ENCODE measurements at regions of chr17 and their contacts with region 1.

Region 1: DNA sequence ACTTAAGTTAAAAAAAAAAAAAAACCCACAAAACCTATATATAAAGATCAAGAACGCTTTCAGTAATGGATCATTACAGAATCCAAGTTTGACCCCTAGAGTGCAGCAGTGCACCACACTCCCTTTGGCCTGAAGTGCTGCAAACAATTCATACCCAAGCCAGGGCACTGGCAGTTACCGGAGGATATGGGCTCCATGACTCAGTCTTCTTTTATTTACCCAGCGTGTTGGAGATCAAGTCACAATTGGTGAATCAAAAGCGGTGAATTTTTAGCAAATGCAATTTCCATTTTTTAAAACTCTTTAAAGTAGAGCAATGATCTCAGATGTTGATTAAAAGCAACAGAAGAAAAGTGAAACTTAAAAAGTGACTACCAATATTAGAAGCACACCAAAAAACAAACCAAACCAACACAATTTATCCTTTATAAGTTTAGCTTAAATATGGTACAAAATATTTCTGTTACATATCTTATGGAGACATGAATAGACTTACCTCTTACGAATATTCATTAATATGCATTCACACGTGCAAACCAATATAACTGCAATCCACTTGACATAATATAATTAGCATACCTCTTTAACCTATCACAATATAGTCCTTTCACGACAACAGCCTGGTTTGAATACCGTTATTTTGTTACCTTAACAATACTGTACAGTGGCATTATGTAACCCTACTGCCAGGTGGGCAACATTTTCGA is 46.3 kb downstream of the ZNF652 start:
- DNase-seq: peak; percentile 81
- H3K4me3 ChIP-seq: no peak overlapping the region
- H3K27ac ChIP-seq: no peak overlapping the region
- H3K4me1 ChIP-seq: peaks cover 0 to 14% (median 6%) of the 10 kb centered on the region in 4 donors
- H3K27me3 ChIP-seq: no peaks in the 10 kb centered on the region
- CTCF ChIP-seq: peak; percentile 80 to 81

Region 2: DNA sequence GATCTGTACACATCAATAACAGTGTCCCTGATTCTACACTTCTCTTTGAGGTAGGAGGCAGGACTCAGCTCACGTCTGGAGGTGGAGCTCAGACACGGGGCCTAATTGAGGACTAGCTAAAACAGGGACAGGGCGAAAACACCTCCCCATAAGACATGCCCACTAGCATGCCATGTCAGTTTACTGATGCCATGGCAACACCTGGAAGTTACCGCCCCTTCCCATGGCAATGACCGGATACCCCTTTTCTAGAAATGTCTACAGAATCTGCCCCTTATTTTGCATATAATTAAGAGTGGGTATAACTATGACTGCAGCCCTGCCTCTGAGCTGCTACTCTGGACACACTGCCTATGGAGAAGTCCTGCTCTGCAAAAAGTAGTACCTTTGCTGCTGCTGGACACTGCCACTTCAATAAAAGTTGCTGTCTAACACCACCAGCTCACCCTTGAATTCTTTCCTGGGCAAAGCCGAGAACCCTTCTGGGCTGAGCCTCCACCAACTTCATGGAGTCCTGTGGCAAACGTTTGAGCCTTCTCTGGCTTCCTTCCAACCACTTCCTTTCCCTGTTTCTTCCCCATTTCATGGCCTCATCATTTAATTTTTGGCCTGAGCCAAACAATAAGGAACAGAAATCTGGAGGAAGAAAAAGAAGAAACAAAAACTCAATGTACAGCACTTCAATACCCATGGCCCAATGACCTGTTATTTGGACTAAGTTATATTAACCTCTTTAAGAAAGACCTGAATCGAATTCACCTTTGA is 78.0 kb after region 1 on chr17:
- intact Hi-C with region 1: loop called (anchors 2 kb)
- DNase-seq: no peak
- H3K4me3 ChIP-seq: no peak overlapping the region
- H3K27ac ChIP-seq: no peak overlapping the region
- H3K4me1 ChIP-seq: peaks cover 0 to 24% (median 2%) of the 10 kb centered on the region in 4 donors
- H3K27me3 ChIP-seq: no peaks in the 10 kb centered on the region
- CTCF ChIP-seq: no peak